ENCODE measurements at regions of chr17 and their contacts with region 1.

Region 1: DNA sequence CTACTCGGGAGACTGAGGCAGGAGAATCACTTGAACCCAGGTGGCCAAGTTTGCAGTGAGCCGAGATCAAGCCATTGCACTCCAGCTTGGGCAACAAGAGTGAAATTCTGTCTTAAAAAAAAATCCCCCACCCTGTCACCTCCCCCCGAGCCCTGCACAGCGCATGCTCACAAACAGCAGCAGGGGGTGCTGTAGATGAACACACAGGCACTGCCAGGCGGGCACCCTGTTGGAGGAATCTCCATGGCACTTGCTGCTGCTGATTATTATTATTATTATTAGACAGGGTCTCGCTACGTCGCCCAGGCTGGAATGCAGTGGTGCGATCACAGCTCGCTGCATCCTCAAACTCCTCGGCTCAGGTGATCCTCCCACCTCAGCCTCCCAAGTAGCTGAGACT is 24.6 kb downstream of the FZD2 start:
- DNase-seq: no peak
- H3K4me3 ChIP-seq: no peak overlapping the region
- H3K27me3 ChIP-seq: no peaks in the 10 kb centered on the region; the same call in 1 of the 2 replicates
- CTCF ChIP-seq: no peak; the same call in 1 of the 2 replicates

Region 2: GRCh38 chr17:43449470-43450248 is 1132.2 kb before region 1 on chr17:
- CTCF ChIA-PET with region 1: no interaction called
- POLR2A ChIA-PET with region 1: no interaction called
- DNase-seq: no peak
- H3K4me3 ChIP-seq: no peak overlapping the region
- H3K27me3 ChIP-seq: no peaks in the 10 kb centered on the region
- CTCF ChIP-seq: no peak

Region 3: DNA sequence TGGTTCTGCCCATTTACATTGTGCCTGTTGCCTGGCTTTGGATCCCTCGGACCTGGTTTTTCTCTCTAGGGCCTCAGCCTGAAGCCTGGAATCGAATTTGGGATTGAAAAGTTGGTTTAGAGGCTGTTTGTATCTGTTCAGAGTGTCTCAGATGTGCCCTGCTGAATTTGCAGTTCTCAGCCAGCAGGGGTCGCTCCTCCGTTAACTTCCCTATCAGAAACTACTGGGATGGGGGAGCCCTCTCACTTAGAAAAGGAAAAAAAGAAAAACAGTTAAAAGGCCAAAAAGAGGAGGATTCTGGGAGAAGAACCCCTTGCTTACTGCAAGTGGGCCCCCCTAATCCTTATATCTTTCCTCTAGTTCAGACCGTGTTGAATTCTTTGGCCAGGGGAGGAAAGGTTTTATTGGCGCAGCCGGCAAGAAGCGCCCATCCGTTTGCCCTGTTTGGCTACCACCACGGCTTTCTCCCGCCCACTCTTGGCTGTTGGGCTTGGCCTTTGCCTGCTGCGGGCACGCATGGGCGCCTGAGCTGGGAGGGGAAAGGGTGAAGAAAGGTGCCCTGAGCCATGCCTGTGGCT is 15.9 kb before region 1 on chr17:
- CTCF ChIA-PET with region 1: interaction called, 15 read pairs
- POLR2A ChIA-PET with region 1: interaction called, 9 read pairs
- DNase-seq: no peak
- H3K4me3 ChIP-seq: no peak overlapping the region
- H3K27me3 ChIP-seq: no peaks in the 10 kb centered on the region
- CTCF ChIP-seq: peak; percentile 59; the same call in 1 of the 2 replicates

Region 4: DNA sequence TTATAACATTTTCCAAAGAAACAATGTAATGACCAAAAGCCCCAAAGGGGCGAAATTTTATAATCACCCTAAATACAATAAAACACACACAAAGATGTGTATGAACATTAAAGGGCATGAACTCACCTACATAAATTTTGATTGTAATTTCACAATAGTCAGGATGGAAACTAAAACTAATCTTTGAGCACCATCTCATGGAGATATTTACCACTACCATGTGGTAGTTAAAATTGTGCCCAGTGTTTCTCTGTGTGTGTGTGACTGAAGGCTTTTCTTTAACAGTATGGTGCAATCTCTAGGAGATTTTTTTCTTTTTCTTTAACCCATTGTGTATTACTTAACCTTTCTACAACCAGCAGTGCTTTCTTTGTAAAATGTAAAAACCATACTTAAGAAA is 54.7 kb after region 1 on chr17:
- CTCF ChIA-PET with region 1: interaction called, 10 read pairs
- POLR2A ChIA-PET with region 1: no interaction called
- DNase-seq: peak; percentile 25
- H3K4me3 ChIP-seq: no peak overlapping the region
- H3K27me3 ChIP-seq: no peaks in the 10 kb centered on the region; the same call in 1 of the 2 replicates
- CTCF ChIP-seq: peak; percentile 46